Ascending aorta (tissue), 2 donors: ENCODE measurements at regions of chr9 and their contacts with region 1.

Region 1: GRCh38 chr9:124771021-124771866 is at the start of gene NR6A1:
- DNase-seq: peak; percentile 70 to 96
- H3K4me3 ChIP-seq: peak within 1 kb of the TSS; percentile 71 to 95
- H3K27ac ChIP-seq: no peak within 1 kb of the TSS
- H3K4me1 ChIP-seq: peaks cover 0 to 20% of the 10 kb centered on the region in 2 donors
- H3K27me3 ChIP-seq: peaks cover 7% of the 10 kb centered on the region
- CTCF ChIP-seq: peak in 2 of 3 experiments; percentile 22 to 26
- total RNA-seq, gene NR6A1: 0.53 TPM

Region 2: DNA sequence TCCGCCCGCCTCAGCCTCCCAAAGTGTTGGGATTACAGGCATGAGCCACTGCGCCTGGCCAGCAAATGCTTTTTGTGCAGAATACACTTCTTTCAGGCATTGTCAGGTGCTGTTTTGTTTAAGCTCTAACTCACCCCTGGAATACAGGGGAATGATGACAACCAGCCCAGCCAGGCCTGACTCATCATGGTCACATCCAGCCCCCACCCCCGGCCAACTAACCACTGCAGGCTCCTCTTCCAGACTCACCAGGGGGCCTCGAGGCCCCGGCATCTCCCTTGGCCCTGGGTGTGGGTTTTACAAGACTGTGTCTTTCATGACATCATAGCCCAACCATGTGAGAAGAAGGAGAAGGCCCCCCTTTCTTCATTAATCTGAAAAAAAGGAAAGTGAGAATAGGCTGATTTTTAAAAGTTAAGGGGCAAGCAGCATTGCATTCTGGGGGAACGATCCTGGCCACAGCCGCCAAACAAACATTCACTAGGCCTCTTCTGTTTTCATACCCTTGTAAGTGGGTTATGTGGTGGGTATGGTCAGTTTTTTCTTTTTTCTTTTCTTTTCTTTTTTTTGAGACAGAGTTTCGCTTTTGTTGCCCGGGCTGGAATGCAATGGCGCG is 41.3 kb after region 1 on chr9:
- intact Hi-C with region 1: no loop called
- DNase-seq: no peak
- H3K4me3 ChIP-seq: no peak overlapping the region
- H3K27ac ChIP-seq: no peak overlapping the region
- H3K4me1 ChIP-seq: no peaks in the 10 kb centered on the region
- H3K27me3 ChIP-seq: no peaks in the 10 kb centered on the region
- CTCF ChIP-seq: no peak

Region 3: DNA sequence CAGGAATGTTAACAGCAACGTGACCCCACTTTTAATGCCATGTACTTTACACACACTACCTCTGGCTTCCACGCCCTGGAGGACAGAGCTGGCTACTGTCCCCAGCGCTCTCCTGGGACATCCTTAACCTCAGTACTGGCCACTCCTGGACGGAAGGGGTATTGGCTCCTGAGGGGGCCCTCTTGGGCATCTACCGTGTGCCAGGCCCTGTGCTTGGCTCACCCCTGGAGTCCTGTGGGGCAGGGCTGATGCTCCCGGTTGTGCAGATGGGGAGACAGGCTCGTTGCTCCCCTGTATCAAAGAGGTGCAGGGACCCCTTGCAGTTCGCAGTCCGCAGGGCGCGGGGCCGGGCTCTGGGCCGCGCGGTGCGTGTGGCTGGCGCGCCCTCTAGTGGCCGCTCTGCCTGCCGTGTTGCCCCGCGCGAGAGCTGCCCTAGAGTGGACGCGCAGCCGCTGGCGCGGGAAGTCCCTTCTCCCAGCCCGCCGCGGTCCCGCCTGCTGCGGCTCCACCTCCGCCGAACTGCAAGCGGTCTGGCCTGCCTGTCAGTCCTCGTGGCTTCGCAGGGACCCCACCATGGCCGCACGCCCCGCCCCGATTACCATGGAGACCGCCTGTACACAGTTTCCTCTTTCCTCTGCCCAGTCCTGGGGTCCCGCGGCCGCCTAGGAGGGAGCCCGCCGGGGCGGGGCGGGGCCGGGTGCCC is 81.7 kb after region 1 on chr9 and contains the start of gene WDR38:
- intact Hi-C with region 1: loop called (anchors 1 kb)
- DNase-seq: peak; percentile 28 to 85
- H3K4me3 ChIP-seq: peak within 1 kb of the TSS; percentile 57 to 60
- H3K27ac ChIP-seq: peak within 1 kb of the TSS; percentile 28 to 50
- H3K4me1 ChIP-seq: peaks cover 7 to 11% of the 10 kb centered on the region in 2 donors
- H3K27me3 ChIP-seq: no peaks in the 10 kb centered on the region
- CTCF ChIP-seq: peak; percentile 92 to 98 (median 97)
- total RNA-seq, gene WDR38: not detected

Region 4: DNA sequence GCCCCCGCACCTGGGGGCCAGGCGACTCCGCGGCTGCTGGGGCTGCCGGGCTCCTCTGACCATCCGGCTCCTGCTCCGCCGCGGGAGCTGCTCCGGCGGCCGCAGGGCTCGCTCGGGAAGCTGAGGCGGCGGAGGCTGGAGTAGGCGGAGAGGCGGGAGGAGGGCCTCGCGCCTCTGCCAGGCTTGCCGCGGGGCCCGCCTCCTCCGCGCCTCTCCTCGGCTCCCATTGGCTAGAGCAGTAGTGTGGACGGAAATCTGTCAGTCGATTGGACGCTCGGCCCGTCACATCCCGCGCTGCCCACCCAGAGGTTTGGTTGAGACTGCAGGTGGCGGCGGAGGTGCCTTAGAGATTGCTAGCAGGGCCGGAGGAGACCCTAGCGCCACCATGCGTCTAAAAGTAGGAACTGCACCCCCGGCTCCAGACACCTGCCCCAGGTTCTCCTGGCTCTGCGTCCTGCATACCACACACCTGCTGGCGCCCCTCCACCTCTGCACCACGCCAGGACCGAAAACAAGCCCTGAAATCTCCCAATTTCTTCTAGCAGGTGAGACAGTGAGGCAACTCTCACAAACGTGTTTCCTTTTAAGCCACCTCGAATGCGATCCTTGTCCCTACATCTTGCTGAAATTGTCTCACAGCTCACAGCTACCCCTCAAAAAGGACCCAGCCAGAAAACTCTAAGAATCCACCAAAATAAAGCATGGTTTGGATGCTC is 372.3 kb after region 1 on chr9 and contains the start of gene SCAI:
- intact Hi-C with region 1: loop called (anchors 5 kb)
- DNase-seq: peak; percentile 97 to 100
- H3K4me3 ChIP-seq: peak within 1 kb of the TSS; percentile 76 to 95
- H3K27ac ChIP-seq: peak within 1 kb of the TSS; percentile 56 to 63
- H3K4me1 ChIP-seq: peaks cover 0 to 8% of the 10 kb centered on the region in 2 donors
- H3K27me3 ChIP-seq: no peaks in the 10 kb centered on the region
- CTCF ChIP-seq: peak; percentile 98 to 99 (median 99)
- total RNA-seq, gene SCAI: 2.4 TPM

Region 5: GRCh38 chr9:125374443-125375309 is 603.4 kb after region 1 on chr9:
- intact Hi-C with region 1: loop called (anchors 5 kb)
- DNase-seq: peak in 1 of 2 donors; percentile 68
- H3K4me3 ChIP-seq: peak overlapping the region; percentile 36 to 41
- H3K27ac ChIP-seq: no peak overlapping the region
- H3K4me1 ChIP-seq: peaks cover 0 to 2% of the 10 kb centered on the region in 2 donors
- H3K27me3 ChIP-seq: no peaks in the 10 kb centered on the region
- CTCF ChIP-seq: peak; percentile 70 to 85 (median 79)